Activated T-helper 1 cell treated with anti-CD3 and anti-CD28 coated beads, Interleukin-12 subunit alpha, Interleukin-12 subunit beta, Interleukin-2, Interleukin-4 antibody, amounts not matched to agents 30 ng/mL and 10 ng/mL and 1 ng/mL, durations not matched to agents 14 hours and 24 hours and 36 hours (primary cell): ENCODE measurements at regions of chr1 and their contacts with region 1.

Region 1: GRCh38 chr1:151790071-151790940 is at the start of gene TDRKH:
- DNase-seq: peak; percentile 98
- H3K4me3 Mint-ChIP-seq: peak within 1 kb of the TSS; percentile 95
- H3K27ac Mint-ChIP-seq: peak within 1 kb of the TSS; percentile 78
- H3K4me1 Mint-ChIP-seq: peaks cover 33% of the 10 kb centered on the region
- H3K27me3 Mint-ChIP-seq: peaks cover 2% of the 10 kb centered on the region
- total RNA-seq, gene TDRKH: 14.6 and 16.4 TPM in 2 replicates

Region 2: DNA sequence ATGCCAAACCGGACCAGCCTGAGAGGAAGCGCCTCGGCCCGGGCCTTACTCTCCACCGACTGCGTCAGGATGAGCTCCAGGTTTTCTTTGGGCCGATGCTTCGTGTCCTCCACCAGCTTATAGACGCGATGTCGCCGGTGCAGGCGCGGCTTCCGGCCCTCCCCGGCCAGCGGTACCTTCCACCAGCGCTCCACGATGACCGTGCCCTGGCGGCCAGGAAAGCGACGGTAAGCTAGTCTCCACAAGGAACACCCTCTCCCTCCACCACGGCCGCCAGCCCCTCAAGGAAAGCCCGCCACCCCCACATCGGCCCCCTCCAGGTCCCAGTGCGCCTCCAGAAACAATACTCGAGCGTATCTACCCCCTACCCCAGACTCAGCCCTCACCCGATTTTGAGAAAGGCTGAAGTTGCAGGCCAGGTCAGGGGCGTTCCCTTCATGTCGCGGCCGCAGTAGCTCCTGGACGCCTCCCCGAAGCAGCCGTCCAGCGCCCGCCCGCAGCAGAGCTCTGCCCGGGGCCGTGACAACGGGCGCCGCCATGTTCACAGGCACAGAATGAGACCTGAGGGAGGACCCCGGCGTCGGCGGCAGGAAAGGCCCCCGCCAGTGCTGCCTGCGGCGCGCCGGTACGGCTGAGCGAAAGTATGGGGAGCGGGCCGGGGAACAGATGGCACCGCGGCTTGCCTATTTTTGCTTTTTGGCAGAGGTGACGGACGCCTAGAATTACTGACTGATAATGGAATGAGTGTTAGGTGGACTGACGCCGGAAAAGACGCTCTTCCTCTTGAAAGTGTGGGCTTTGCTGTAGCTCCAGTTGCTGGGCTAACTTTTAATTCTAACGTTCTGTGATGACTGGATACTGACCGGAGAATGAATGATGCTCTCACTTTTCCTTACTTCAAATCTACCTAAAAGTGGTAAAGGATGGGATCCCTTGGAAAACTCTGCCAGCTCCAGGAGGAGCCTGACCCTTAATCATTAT is 27.1 kb before region 1 on chr1 and contains the start of gene MRPL9:
- intact Hi-C with region 1: loop called (anchors 1 kb)
- DNase-seq: peak; percentile 84
- H3K4me3 Mint-ChIP-seq: peak within 1 kb of the TSS; percentile 89
- H3K27ac Mint-ChIP-seq: peak within 1 kb of the TSS; percentile 96
- H3K4me1 Mint-ChIP-seq: peaks cover 35% of the 10 kb centered on the region
- H3K27me3 Mint-ChIP-seq: no peaks in the 10 kb centered on the region
- total RNA-seq, gene MRPL9: 136 and 141 TPM in 2 replicates

Region 3: GRCh38 chr1:151805066-151805820 is 14.9 kb after region 1 on chr1 and contains the start of gene LINGO4:
- intact Hi-C with region 1: no loop called
- DNase-seq: no peak
- H3K4me3 Mint-ChIP-seq: no peak within 1 kb of the TSS
- H3K27ac Mint-ChIP-seq: no peak within 1 kb of the TSS
- H3K4me1 Mint-ChIP-seq: peaks cover 5% of the 10 kb centered on the region
- H3K27me3 Mint-ChIP-seq: peaks cover 11% of the 10 kb centered on the region
- total RNA-seq, gene LINGO4: 0.07 and 0.10 TPM in 2 replicates

Region 4: GRCh38 chr1:151822404-151822803 is 32.1 kb after region 1 on chr1:
- intact Hi-C with region 1: loop called (anchors 1 kb)
- DNase-seq: no peak
- H3K4me3 Mint-ChIP-seq: peak overlapping the region; percentile 37
- H3K27ac Mint-ChIP-seq: peak overlapping the region; percentile 83
- H3K4me1 Mint-ChIP-seq: peaks cover 67% of the 10 kb centered on the region
- H3K27me3 Mint-ChIP-seq: no peaks in the 10 kb centered on the region

Region 5: DNA sequence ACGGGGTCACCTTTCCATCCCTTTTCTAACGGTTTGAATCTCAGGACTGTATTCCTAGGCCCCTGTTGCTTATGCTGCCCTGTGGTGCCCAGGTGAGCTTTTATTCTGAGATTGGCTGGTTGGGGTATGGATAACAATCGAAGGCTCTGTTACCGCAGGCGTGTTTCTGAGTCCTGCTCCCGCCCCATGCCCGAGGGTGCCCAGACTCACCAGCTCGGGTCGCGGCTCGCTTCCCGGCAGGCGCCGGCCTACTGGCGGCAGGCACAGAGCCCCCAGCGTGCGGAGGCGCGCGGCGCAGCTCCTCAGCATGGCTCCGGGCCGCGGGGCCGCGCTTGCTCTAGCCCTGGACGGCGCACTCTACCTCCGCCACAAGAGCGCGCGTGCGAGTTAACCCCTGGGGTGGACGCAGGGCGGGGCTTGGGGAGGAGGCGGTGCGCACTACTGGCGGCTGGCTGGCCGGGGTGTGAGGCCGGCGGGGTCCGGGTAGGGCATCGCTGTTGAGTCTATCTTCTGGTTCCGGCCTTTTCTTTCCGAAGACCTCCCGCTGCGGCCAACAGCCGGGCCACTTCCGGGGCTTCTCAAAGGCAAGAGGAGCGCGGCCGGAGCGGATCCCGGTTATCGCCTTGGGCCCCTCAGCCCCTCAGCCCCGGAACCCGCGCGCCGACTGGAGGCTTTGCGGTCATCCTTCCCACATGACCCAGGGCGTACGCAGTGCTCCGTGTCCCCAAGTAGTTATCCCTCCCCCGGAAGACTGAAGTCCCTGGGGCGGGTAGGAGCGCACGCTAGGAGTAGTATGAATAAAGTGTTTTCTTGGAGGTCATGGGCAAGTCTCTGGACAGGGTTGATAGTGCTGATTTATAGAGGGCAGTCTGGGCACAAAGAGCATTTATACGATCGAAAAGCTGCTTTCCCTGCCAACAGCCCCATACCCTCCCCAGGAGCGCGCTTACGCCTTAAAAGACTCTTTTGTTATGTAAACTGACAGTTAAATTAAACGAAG is 119.1 kb after region 1 on chr1 and contains the start of gene THEM4:
- intact Hi-C with region 1: loop called (anchors 2 kb)
- DNase-seq: peak; percentile 87
- H3K4me3 Mint-ChIP-seq: peak within 1 kb of the TSS; percentile 80
- H3K27ac Mint-ChIP-seq: peak within 1 kb of the TSS; percentile 85
- H3K4me1 Mint-ChIP-seq: peaks cover 37% of the 10 kb centered on the region
- H3K27me3 Mint-ChIP-seq: peaks cover 5% of the 10 kb centered on the region
- total RNA-seq, gene THEM4: 24.7 and 27.5 TPM in 2 replicates